ENCODE measurements at regions of chr17 and their contacts with region 1.

Region 1: GRCh38 chr17:64262417-64263260 is at the start of gene TEX2:
- DNase-seq: peak; percentile 54
- H3K4me3 ChIP-seq: peak within 1 kb of the TSS; percentile 89 to 96
- H3K27ac ChIP-seq: peak within 1 kb of the TSS; percentile 82 to 89
- H3K4me1 ChIP-seq: no peaks in the 10 kb centered on the region
- H3K27me3 ChIP-seq: no peaks in the 10 kb centered on the region
- CTCF ChIP-seq: no peak
- POLR2A ChIP-seq: peak; percentile 71
- total RNA-seq, gene TEX2: 31.3 to 43.8 TPM

Region 2: DNA sequence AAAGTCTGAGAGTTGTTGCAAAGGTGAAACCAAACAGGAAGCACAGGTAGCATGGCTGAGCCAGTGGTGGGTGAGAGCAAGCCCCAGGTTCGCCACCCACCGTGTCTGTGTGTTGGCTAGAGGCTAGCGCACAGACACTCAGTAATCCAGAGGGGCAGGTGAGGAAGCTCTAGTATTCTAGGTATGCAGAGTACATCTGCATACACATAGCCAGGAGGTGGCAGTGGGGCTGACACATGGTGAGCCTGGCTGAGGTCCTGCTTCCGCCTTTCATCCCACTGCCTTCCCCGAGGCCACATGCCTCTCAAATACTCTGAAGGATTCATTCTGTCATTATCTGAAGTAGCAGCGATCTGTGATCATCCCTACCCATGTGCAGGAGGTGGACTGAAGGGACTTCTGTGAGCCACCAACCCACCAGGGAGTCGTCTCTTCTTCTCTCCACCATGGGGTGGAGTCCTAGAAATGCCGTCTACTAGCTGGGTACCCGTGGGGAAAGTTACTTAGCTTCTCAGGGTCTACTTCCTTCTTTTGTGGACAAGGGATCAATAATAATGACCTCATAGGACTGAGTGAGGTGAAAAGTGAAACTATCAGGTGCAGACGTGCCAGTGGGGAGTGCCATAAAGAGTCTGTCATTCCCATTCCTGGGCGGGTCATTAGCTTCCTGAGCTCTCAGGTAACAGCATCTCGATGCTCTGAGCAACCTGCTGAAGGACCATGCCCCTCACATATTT is 206.2 kb before region 1 on chr17:
- intact Hi-C with region 1: loop called (anchors 10 kb)
- DNase-seq: no peak
- H3K4me3 ChIP-seq: no peak overlapping the region
- H3K27ac ChIP-seq: no peak overlapping the region
- H3K4me1 ChIP-seq: no peaks in the 10 kb centered on the region
- H3K27me3 ChIP-seq: no peaks in the 10 kb centered on the region
- CTCF ChIP-seq: no peak
- POLR2A ChIP-seq: no peak

Region 3: DNA sequence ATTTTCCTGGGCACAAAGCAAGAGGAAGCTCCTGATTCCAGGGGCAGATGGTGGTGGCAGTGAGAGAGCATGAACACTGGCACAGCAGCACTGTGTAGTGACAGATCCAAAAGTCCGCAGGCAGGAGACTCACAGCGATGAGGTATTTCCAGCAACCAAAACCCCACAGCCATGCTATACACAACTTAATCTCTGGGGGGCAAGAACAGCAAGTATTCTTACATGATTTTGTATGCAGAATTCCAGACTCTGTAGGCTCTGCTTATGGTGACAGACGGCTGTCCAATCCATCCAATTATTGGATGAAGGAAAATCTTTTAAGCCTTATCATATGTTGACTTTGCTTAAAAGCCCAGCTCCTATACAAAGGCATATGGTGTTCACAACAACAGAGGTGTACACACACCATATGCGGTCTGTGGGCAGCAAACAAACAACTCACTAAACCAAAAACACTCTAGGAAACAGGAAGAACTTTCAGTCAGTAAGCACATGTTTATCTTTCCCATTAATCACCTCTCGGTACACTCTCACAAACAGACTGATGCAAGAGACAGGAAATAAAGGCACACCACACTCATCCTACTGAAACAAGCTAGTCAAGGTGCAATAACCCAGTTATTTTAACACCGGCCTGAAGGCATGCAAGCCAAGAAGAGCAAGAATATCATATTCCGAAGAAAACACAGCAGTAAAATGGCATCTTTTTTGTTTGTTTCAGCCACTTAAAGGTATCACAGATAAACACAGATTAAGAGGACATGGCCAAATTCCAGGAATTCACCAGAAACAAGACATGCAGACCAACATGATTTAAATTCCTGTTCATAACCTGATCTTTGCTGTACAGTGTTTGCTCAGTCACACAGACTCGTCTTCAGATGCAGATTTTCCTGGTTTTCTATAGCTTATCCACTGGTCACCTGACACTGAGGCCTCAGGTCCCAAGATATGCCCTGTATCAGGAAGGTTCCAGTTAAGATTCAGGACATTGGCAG is 180.5 kb before region 1 on chr17:
- intact Hi-C with region 1: no loop called
- DNase-seq: peak; percentile 69
- H3K4me3 ChIP-seq: no peak overlapping the region
- H3K27ac ChIP-seq: peak overlapping the region; percentile 34 to 69
- H3K4me1 ChIP-seq: peaks cover 16% of the 10 kb centered on the region
- H3K27me3 ChIP-seq: no peaks in the 10 kb centered on the region
- CTCF ChIP-seq: peak in 1 of 4 experiments; percentile 2
- POLR2A ChIP-seq: no peak

Region 4: DNA sequence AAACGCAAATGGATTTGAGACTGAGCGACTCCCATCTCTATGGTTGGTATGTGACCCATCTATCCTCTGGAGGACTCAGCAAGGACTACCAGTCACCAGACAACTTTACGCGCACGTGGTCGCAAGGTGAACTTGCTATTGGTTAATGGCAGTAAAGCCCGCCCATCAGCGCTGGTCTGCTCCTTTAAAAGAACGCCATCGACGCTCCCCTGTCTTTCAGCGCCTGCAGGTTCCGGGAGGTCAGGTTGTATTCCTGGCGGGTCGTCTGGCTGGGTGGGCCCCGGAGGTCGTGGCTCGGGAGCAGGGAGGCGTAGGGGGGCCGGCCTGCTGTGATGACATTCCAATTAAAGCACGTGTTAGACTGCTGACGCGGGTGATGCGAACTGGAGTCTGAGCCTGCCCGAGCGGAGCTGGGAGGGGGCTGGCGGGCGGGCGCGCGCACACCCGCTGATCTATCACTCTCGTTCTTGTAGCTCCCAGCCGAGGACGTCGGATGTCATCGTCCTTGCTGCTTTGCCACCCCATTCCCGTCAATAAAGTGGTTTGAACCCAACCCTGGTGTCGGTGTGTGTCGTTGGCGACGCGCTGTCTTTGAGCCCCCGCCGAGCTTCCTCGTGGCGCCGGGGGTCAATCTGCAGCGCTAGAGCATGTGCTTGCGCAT is 116.8 kb before region 1 on chr17:
- intact Hi-C with region 1: loop called (anchors 5 kb)
- DNase-seq: peak; percentile 99
- H3K4me3 ChIP-seq: peak overlapping the region; percentile 68 to 83
- H3K27ac ChIP-seq: peak overlapping the region; percentile 92 to 99
- H3K4me1 ChIP-seq: no peaks in the 10 kb centered on the region
- H3K27me3 ChIP-seq: no peaks in the 10 kb centered on the region
- CTCF ChIP-seq: peak in 1 of 4 experiments; percentile 48
- POLR2A ChIP-seq: no peak

Measured in prostate gland (tissue), 2 donors.